B cell (primary cell): ENCODE measurements at regions of chr6 and their contacts with region 1.

Region 1: GRCh38 chr6:39143233-39143930 is 28.4 kb upstream of the SAYSD1 start:
- DNase-seq: peak; percentile 24
- ATAC-seq: no peak
- H3K4me3 ChIP-seq: no peak overlapping the region
- H3K4me3 Mint-ChIP-seq: no peak overlapping the region
- H3K27ac ChIP-seq: no peak overlapping the region
- H3K27ac Mint-ChIP-seq: no peak overlapping the region
- H3K4me1 ChIP-seq: peaks cover 0 to 10% of the 10 kb centered on the region in 2 donors
- H3K4me1 Mint-ChIP-seq: no peaks in the 10 kb centered on the region
- H3K27me3 ChIP-seq: peaks cover 0 to 12% (median 2%) of the 10 kb centered on the region in 4 experiments
- H3K27me3 Mint-ChIP-seq: peaks cover 55% of the 10 kb centered on the region
- CTCF ChIP-seq: no peak

Region 2: GRCh38 chr6:39003072-39003471 is 140.3 kb before region 1 on chr6:
- CTCF ChIA-PET with region 1: no interaction called
- POLR2A ChIA-PET with region 1: no interaction called
- intact Hi-C with region 1: loop called (anchors 10 kb)
- DNase-seq: no peak
- ATAC-seq: no peak
- H3K4me3 ChIP-seq: no peak overlapping the region
- H3K4me3 Mint-ChIP-seq: no peak overlapping the region
- H3K27ac ChIP-seq: no peak overlapping the region
- H3K27ac Mint-ChIP-seq: no peak overlapping the region
- H3K4me1 ChIP-seq: no peaks in the 10 kb centered on the region
- H3K4me1 Mint-ChIP-seq: no peaks in the 10 kb centered on the region
- H3K27me3 ChIP-seq: peaks cover 0 to 11% (median 7%) of the 10 kb centered on the region in 4 experiments
- H3K27me3 Mint-ChIP-seq: peaks cover 30% of the 10 kb centered on the region
- CTCF ChIP-seq: no peak